ENCODE measurements at regions of chr17 and their contacts with region 1.

Region 1: GRCh38 chr17:60641810-60642220 is 35.8 kb upstream of the BCAS3 start:
- DNase-seq: peak; percentile 43
- H3K4me3 ChIP-seq: no peak overlapping the region
- H3K27ac ChIP-seq: no peak overlapping the region
- H3K4me1 ChIP-seq: no peaks in the 10 kb centered on the region
- H3K27me3 ChIP-seq: no peaks in the 10 kb centered on the region
- CTCF ChIP-seq: peak in 3 of 4 experiments; percentile 21 to 39 (median 36)
- POLR2A ChIP-seq: no peak

Region 2: DNA sequence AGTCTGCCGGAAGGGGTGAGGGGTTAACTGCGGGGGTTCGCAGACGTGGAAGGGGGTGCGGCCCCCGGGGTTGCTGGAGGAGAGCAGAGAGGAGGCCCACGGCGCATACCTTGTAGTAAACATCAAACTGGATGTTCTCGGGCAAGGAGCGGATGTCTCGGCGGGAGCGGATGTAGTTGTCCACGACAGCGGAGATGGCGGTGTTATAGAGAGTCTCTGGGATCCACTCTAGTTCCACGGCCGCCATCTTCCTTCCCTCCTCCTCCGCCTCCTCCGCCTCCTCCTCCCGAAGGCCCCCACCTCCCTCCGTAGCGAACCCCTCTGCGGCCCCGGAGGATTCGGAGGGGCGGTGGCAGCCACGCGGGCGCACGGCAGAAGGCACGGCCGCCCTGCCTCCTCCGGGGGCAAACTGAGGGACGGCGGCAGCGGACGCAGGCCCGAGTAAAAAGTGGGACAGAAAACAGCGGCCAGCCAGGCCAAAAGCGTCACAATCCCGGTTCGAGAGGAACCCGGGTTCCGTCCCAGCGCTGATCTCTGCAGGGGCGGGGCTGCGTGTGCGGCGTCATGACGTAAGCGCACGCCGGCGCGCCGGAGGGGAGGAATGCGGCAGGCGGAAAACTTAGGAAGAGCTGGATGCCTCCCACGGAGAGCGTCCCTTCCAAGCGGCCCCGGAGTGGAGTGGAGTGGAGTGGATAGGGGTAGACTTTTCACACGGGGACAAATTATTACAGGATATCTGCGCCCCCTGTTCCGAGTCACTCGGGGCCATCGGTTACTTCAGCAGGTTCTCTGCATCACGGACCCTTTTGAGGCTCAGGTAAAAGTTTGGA is 115.9 kb before region 1 on chr17 and contains the start of gene APPBP2:
- intact Hi-C with region 1: loop called (anchors 5 kb)
- DNase-seq: peak; percentile 90
- H3K4me3 ChIP-seq: peak within 1 kb of the TSS; percentile 78 to 90
- H3K27ac ChIP-seq: peak within 1 kb of the TSS; percentile 98 to 100
- H3K4me1 ChIP-seq: no peaks in the 10 kb centered on the region
- H3K27me3 ChIP-seq: no peaks in the 10 kb centered on the region
- CTCF ChIP-seq: no peak
- POLR2A ChIP-seq: peak; percentile 93
- total RNA-seq, gene APPBP2: 35.7 to 50.0 TPM

Region 3: DNA sequence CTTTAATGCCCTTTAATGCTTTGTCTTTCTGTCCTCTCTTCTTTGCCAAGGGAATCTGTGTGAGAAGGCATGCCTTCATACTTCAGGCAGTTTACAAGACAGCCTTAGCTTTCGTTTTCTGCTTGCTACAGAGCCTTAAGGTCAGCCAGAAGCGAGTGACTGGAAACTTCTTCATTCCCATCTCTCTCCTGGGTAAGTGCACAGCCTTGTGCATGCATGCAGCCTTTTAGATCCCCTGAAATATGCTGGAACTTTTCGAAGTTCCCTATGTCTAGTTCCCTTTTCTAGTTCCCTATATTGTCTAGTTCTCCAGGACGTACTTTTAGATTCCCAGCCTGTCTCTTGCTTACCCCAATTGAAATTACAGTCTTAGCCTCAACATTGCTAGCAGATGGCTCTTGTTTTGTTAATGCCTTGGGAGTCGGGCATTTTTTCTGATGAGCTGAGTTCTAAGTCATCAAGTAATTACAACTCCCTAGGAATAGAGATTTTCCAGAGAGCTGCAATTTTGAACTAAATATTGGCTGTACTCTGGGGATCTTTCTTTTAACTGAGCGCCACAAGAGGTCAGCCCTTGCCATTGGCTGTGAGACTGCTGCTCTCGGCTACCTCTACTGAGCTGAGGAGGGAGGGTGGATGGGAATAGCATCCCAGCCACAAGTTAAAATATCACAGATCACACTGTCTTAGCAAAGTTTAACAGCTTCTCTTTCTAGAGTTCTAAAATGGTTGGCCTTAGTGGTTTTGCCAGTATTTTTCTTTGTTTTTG is 64.5 kb before region 1 on chr17:
- intact Hi-C with region 1: loop called (anchors 2 kb)
- DNase-seq: peak; percentile 45
- H3K4me3 ChIP-seq: peak overlapping the region; percentile 24 to 28
- H3K27ac ChIP-seq: peak overlapping the region; percentile 58 to 72
- H3K4me1 ChIP-seq: no peaks in the 10 kb centered on the region
- H3K27me3 ChIP-seq: no peaks in the 10 kb centered on the region
- CTCF ChIP-seq: peak in 3 of 4 experiments; percentile 17 to 42 (median 37)
- POLR2A ChIP-seq: no peak